PC-3 (cell line): ENCODE measurements at regions of chr17 and their contacts with region 1.

Region 1: GRCh38 chr17:77331301-77331864 is 190.6 kb downstream of the SEC14L1 start:
- DNase-seq: peak; percentile 97
- ATAC-seq: peak; percentile 71
- H3K4me3 ChIP-seq: peak overlapping the region; percentile 46; the same call in 1 of the 2 replicates
- H3K27ac ChIP-seq: peak overlapping the region; percentile 89
- H3K4me1 ChIP-seq: peaks cover 35% of the 10 kb centered on the region
- H3K27me3 ChIP-seq: no peaks in the 10 kb centered on the region
- CTCF ChIP-seq: peak; percentile 97

Region 2: DNA sequence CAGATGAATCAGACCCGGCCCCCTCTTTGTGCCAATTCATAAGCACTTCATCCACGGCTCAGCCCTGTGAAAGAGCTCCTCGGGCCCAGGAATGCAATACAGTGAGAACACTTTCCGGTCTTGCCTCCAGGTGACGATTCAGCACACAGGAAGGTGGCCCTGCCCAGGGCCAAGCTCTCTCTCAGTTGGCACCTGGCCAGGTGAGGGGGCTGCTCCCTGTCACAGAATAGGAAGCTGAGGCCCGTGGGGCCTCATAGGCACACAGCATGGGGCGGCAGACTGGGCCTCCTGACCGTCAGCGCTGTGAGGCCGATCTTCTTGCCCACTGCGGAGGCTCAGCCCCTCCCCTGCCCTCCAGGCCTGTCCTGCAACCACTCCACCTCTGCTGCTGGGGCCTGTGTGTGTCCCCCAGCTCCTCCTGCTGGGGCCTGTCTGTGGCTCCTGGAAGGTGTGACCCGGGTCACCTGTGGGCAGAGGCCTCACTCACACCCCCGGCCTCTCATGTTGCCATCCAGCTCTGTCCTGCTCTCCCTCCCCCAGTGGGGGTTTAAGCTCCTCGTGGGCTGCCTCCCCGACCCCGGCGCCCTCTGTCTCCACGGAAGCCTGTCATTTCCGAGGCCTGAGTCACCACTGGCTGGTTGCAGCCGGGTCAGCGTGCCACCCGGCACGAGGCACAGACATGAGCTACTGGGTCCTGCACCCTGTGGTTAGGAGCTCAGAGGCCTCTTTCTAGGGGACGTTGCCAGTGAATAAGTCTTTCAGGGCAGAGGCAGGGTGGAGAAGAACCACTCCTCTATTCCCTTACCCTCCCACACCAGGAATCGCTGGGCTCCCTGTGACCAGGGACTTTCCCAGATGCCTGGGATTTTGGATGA is 76.2 kb before region 1 on chr17:
- CTCF ChIA-PET with region 1: no interaction called
- POLR2A ChIA-PET with region 1: no interaction called
- intact Hi-C with region 1: no loop called
- DNase-seq: peak; percentile 99
- ATAC-seq: peak; percentile 81
- H3K4me3 ChIP-seq: peak overlapping the region; percentile 0; the same call in 1 of the 2 replicates
- H3K27ac ChIP-seq: peak overlapping the region; percentile 90
- H3K4me1 ChIP-seq: peaks cover 35% of the 10 kb centered on the region
- H3K27me3 ChIP-seq: no peaks in the 10 kb centered on the region
- CTCF ChIP-seq: no peak

Region 3: GRCh38 chr17:77424585-77425344 is 93.4 kb after region 1 on chr17:
- CTCF ChIA-PET with region 1: interaction called, 6 read pairs
- POLR2A ChIA-PET with region 1: no interaction called
- intact Hi-C with region 1: loop called (anchors 2 kb)
- DNase-seq: no peak
- ATAC-seq: no peak
- H3K4me3 ChIP-seq: no peak overlapping the region
- H3K27ac ChIP-seq: peak overlapping the region; percentile 87
- H3K4me1 ChIP-seq: peaks cover 87% of the 10 kb centered on the region
- H3K27me3 ChIP-seq: no peaks in the 10 kb centered on the region
- CTCF ChIP-seq: no peak

Region 4: GRCh38 chr17:77429919-77430752 is 98.8 kb after region 1 on chr17:
- CTCF ChIA-PET with region 1: interaction called, 6 read pairs
- POLR2A ChIA-PET with region 1: no interaction called
- intact Hi-C with region 1: loop called (anchors 1 kb)
- DNase-seq: peak; percentile 91
- ATAC-seq: peak; percentile 21
- H3K4me3 ChIP-seq: no peak overlapping the region
- H3K27ac ChIP-seq: peak overlapping the region; percentile 32; the same call in 1 of the 2 replicates
- H3K4me1 ChIP-seq: peaks cover 50% of the 10 kb centered on the region
- H3K27me3 ChIP-seq: no peaks in the 10 kb centered on the region
- CTCF ChIP-seq: peak; percentile 93

Region 5: DNA sequence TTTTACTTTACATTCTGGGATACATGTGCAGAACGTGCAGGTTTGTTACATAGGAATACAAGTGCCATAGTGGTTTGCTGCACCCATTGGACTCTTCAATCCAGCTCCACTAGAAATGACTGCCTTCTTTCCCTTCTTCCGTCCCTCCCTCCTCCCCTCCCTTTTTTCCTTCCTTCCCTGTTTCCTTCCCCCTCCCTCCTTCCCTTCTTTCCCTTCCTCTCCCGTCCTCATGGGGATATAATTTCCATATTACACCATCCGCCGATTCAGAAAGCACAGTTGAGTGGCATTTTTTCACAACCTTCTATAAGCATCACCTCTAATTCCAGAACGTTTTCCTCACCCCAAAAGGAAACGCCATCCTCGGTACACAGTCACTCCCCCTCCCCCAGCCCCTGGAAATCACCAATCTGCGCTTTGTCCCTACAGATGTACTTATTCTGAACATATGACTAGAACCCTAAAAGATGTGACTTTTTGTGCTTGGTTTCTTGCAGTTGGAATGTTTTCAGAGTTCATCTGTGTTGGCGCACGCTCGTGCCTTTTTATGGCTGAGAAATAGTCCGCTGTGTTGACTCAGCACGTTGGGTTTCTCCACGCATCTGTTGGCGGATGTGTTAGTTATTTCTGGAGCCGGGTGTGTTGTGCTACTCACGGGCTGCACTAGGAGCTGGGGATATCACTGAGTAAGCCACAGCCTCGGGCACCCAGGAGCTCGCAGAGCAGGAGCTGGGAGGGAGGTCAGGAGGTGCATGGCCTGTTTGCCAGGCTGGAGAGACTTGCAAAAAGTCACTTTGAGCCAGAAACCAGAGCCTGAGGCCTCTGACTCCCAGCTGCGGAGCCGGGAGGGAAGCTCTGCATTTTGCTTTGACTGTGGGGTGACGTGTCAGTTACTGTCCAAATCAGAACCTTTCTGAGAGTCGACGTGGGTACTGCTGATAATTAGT is 145.8 kb after region 1 on chr17:
- CTCF ChIA-PET with region 1: no interaction called
- POLR2A ChIA-PET with region 1: no interaction called
- intact Hi-C with region 1: loop called (anchors 5 kb)
- DNase-seq: peak; percentile 89
- ATAC-seq: peak; percentile 84
- H3K4me3 ChIP-seq: peak overlapping the region; percentile 47
- H3K27ac ChIP-seq: peak overlapping the region; percentile 75
- H3K4me1 ChIP-seq: peaks cover 43% of the 10 kb centered on the region
- H3K27me3 ChIP-seq: no peaks in the 10 kb centered on the region
- CTCF ChIP-seq: no peak

Region 6: GRCh38 chr17:77494664-77495435 is 163.5 kb after region 1 on chr17:
- CTCF ChIA-PET with region 1: no interaction called
- POLR2A ChIA-PET with region 1: no interaction called
- intact Hi-C with region 1: loop called (anchors 1 kb)
- DNase-seq: peak; percentile 83
- ATAC-seq: peak; percentile 77
- H3K4me3 ChIP-seq: no peak overlapping the region
- H3K27ac ChIP-seq: no peak overlapping the region
- H3K4me1 ChIP-seq: no peaks in the 10 kb centered on the region
- H3K27me3 ChIP-seq: no peaks in the 10 kb centered on the region
- CTCF ChIP-seq: peak; percentile 99